T-cell (primary cell): ENCODE measurements at regions of chr14 and their contacts with region 1.

Region 1: GRCh38 chr14:75293920-75294642 is 15.5 kb downstream of the FOS start:
- DNase-seq: peak; percentile 87 to 99 (median 92)
- ATAC-seq: peak; percentile 80 to 97 (median 96)
- H3K4me3 ChIP-seq: peak overlapping the region; percentile 66 to 70
- H3K4me3 Mint-ChIP-seq: peak overlapping the region; percentile 79 to 92 (median 88)
- H3K27ac ChIP-seq: peak overlapping the region; percentile 96
- H3K27ac Mint-ChIP-seq: peak overlapping the region; percentile 85 to 90
- H3K4me1 ChIP-seq: peaks cover 12 to 32% of the 10 kb centered on the region in 2 experiments
- H3K4me1 Mint-ChIP-seq: peaks cover 13 to 25% (median 23%) of the 10 kb centered on the region in 3 donors
- H3K27me3 ChIP-seq: peaks cover 0 to 7% of the 10 kb centered on the region in 2 experiments
- H3K27me3 Mint-ChIP-seq: no peaks in the 10 kb centered on the region

Region 2: DNA sequence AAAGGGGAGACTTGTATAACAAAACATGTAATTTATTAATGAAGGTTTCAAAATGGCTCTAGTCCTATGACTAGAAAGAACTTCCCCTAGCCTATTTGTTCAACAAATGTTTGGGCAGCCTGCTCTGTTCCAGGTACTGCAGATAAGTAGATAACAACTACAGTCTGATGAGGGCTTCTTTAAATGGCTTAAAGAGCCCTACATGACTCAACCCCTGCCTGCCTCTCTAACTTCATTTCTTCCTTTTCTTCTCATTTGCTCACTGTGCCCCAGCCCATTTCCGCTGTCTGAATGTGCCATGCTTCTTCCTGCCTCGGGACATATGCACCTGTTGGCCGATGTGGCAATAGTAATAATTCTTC is 1231.3 kb before region 1 on chr14:
- CTCF ChIA-PET with region 1: no interaction called
- POLR2A ChIA-PET with region 1: no interaction called
- DNase-seq: no peak
- ATAC-seq: no peak
- H3K4me3 ChIP-seq: no peak overlapping the region
- H3K4me3 Mint-ChIP-seq: no peak overlapping the region
- H3K27ac ChIP-seq: no peak overlapping the region
- H3K27ac Mint-ChIP-seq: no peak overlapping the region
- H3K4me1 ChIP-seq: no peaks in the 10 kb centered on the region
- H3K4me1 Mint-ChIP-seq: no peaks in the 10 kb centered on the region
- H3K27me3 ChIP-seq: no peaks in the 10 kb centered on the region
- H3K27me3 Mint-ChIP-seq: no peaks in the 10 kb centered on the region

Region 3: DNA sequence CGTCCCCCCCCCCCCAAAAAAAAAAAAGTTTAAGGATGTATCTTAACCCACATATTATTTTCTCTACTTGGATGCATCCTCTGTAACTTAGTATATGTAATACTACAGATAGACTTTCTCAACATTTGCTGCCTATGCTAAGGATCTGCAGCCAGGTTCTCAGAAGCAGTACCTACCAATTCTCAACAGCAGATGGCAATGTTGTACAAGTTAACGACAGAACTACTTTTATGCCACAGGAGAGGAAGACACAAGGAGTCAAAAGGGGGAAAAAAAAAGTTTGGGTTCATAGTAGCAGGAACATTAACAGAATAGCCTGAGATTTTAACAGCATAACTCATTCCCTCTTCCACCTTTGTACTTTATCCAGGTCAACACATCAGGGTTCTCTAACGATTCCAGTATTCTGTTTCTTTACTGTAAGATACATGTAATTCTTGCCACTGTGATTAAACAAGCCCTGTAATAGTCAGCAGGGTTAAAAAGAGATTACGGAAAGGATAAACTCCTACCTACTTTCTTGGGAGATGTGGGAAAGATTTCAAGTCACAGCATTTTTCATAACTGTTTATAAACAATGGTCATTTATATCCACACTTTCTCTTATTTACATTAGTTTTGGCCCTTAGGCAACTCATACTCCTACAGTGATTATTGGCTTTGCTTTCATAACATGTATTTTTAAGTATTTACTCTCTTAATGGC is 161.5 kb before region 1 on chr14:
- CTCF ChIA-PET with region 1: interaction called, 9 to 13 read pairs
- POLR2A ChIA-PET with region 1: interaction called in 1 of 2 experiments, 4 read pairs
- DNase-seq: peak in 23 of 35 experiments; percentile 6 to 87 (median 31)
- ATAC-seq: peak; percentile 73 to 95 (median 86)
- H3K4me3 ChIP-seq: no peak overlapping the region
- H3K4me3 Mint-ChIP-seq: no peak overlapping the region
- H3K27ac ChIP-seq: no peak overlapping the region
- H3K27ac Mint-ChIP-seq: peak overlapping the region; percentile 27 to 54
- H3K4me1 ChIP-seq: peaks cover 6 to 10% of the 10 kb centered on the region in 2 experiments
- H3K4me1 Mint-ChIP-seq: peaks cover 11 to 19% (median 15%) of the 10 kb centered on the region in 3 donors
- H3K27me3 ChIP-seq: no peaks in the 10 kb centered on the region
- H3K27me3 Mint-ChIP-seq: no peaks in the 10 kb centered on the region

Region 4: DNA sequence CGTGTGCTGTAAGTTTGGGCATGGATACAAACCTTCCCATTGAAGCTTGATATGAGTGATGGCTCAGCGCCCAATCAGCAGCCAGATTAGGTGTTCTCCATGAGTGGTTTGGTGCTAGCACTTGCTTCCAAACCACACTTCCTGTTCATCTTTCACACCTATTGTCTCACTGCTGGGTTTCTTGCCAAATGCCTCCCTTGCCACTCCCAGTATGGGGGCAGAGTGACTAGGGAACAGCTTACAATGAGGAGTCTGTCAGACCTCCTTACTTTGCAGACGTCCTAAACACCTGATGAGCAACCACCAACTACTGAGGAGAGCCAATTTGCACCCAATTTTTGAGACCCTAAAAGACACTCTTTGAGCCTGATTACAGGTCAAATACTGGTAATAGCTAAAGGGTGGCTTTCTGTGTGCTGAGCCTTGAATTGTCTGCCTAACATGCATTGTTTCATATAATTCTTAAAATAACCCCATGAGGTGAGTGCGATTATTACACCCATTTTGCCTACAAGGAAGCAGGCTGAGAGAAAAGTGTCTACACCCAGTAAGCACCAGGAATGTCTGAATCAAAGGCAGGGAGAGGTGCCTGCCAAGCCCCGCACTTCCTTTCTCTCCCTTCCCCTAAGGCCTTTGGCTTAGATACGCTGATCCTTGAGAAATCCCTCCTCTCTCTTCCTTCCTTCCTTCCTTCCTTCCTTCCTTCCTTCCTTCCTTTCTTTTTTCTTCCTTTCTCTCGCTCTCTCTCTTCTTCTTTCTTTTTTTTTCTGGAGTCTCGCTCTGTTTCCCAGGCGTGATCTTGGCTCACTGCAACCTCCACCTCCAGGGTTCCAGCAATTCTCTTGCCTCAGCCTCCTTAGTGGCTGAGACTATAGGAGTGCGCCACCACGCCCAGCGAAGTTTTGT is 63.7 kb before region 1 on chr14:
- CTCF ChIA-PET with region 1: interaction called, 5 to 24 read pairs
- POLR2A ChIA-PET with region 1: interaction called in 1 of 2 experiments, 21 read pairs
- DNase-seq: peak; percentile 17 to 84 (median 49)
- ATAC-seq: peak; percentile 66 to 83 (median 73)
- H3K4me3 ChIP-seq: no peak overlapping the region
- H3K4me3 Mint-ChIP-seq: peak overlapping the region in 1 of 3 donors; percentile 52
- H3K27ac ChIP-seq: peak overlapping the region; percentile 48
- H3K27ac Mint-ChIP-seq: peak overlapping the region; percentile 87 to 89
- H3K4me1 ChIP-seq: peaks cover 17 to 65% of the 10 kb centered on the region in 2 experiments
- H3K4me1 Mint-ChIP-seq: peaks cover 56 to 68% (median 63%) of the 10 kb centered on the region in 3 donors
- H3K27me3 ChIP-seq: peaks cover 0 to 3% of the 10 kb centered on the region in 2 experiments
- H3K27me3 Mint-ChIP-seq: no peaks in the 10 kb centered on the region

Region 5: DNA sequence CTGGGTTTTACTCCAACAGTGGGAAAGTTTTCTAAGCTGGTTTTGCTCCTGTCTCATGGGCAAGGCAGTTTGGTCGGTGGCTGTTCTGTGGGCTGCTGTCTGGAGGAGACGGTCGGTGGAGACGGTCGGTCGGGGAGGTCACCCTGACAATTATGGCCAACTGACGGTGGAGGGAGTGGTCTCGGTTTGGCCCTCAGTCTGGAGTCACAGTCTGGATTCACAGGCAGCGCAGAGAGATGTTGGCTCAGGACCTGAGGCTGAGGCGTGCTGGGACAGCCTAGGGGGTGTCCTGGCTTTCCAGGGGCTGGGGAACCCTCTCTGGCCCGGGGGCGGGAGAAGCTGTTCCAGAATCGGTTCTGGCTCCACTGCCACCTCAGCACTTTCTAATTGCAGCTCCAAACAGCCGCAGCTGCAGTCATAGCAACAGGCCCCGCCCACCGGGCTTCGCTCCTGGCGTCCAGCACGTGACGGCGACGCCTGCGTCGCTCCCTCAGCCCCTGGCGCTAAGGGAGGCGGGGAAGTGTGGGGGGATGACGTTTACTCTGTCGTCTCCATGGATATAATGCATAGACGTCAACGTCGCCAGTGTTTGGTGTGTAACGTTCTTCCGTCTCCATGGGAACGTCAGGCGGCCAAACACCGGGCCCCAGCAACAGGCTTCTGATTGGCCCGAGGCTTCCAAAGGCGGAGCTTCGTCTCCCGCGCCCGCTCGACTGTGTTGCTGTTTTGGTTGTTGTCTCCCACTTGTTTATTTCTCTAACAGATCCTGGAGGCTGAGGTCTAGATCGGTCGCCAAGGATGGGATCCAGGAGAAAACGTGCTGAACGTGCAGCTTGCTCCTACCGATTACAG is 35.2 kb before region 1 on chr14:
- CTCF ChIA-PET with region 1: interaction called, 22 to 24 read pairs
- POLR2A ChIA-PET with region 1: interaction called, 12 to 27 read pairs
- DNase-seq: peak; percentile 92 to 100 (median 100)
- ATAC-seq: peak; percentile 91 to 98 (median 96)
- H3K4me3 ChIP-seq: peak overlapping the region; percentile 38 to 47
- H3K4me3 Mint-ChIP-seq: peak overlapping the region; percentile 85 to 87 (median 87)
- H3K27ac ChIP-seq: peak overlapping the region; percentile 95
- H3K27ac Mint-ChIP-seq: peak overlapping the region; percentile 98 to 100
- H3K4me1 ChIP-seq: peaks cover 9 to 23% of the 10 kb centered on the region in 2 experiments
- H3K4me1 Mint-ChIP-seq: peaks cover 29 to 45% (median 38%) of the 10 kb centered on the region in 3 donors
- H3K27me3 ChIP-seq: peaks cover 0 to 8% of the 10 kb centered on the region in 2 experiments
- H3K27me3 Mint-ChIP-seq: no peaks in the 10 kb centered on the region

Region 6: DNA sequence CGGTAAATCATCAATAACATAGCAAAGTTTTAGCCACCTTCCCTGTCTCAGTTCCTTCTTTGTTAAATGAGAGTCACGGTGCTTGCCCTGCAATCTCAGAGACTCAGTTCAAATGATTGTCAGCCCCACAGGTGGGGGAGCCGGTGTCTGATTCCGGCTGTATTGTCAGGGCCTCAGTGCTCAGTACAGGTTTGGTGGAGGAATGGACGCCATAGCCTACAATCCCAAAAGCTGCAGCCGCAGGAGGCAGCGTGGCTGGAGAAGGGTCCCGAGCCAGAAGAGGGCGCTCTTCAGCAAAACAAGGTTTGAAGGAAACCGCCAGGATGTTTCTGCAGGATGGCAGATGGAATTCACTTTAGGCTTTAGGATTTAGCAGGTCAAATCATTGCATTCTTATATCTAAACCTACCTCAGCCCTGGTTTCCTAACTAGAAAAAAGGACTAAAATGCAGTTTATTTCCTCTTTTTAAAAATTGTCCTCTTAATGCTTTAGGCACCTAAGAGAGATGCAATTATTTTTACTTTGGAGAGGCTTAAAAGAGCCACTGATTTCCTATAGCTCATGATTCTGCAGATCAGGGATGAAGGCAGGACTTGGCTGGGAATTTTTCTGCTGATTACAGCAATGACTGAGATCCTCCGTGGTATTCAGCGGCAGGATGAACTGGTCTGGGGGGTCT is 13.8 kb after region 1 on chr14:
- CTCF ChIA-PET with region 1: interaction called, 3 to 5 read pairs
- POLR2A ChIA-PET with region 1: interaction called in 1 of 2 experiments, 11 read pairs
- DNase-seq: peak in 33 of 35 experiments; percentile 25 to 85 (median 63)
- ATAC-seq: peak; percentile 43 to 78 (median 64)
- H3K4me3 ChIP-seq: no peak overlapping the region
- H3K4me3 Mint-ChIP-seq: no peak overlapping the region
- H3K27ac ChIP-seq: no peak overlapping the region
- H3K27ac Mint-ChIP-seq: no peak overlapping the region
- H3K4me1 ChIP-seq: peaks cover 0 to 11% of the 10 kb centered on the region in 2 experiments
- H3K4me1 Mint-ChIP-seq: peaks cover 3 to 10% (median 7%) of the 10 kb centered on the region in 3 donors
- H3K27me3 ChIP-seq: no peaks in the 10 kb centered on the region
- H3K27me3 Mint-ChIP-seq: no peaks in the 10 kb centered on the region

Region 7: DNA sequence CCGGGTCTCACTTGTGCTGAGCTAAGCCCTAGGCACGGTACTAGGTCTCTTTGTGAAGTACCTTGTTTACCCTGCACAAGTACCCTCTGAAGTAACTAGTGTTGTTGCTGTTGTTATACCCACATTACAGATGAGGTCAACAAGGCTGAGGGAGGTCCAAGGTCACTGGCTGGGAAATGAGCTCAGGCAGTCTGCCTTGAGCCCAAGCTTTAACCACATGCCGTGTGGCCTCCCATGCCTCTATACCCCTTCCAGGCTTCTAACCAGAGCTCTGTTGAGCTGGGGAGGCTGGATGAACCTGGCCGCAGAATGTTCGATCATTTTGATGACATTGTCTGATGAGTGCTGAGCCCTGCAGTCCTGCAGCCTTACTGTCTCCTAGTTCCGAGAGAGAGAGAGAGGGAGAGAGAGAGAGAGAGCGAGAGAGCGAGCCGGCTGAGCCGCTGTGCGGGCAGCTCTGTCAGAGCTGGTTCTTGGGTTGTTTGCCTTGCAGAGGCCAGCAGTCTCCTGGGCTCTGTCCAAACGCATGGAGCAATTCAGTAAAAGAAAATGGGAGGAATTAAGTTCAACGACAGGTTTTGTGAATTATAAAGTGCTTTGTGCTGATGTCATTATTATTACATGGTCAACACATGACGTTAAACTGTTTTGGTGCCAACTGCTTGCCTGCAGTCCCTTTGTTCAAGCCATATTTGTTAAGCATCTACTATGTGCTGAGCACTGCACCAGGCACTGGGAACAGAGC is 146.8 kb after region 1 on chr14:
- CTCF ChIA-PET with region 1: no interaction called
- POLR2A ChIA-PET with region 1: no interaction called
- DNase-seq: no peak
- ATAC-seq: no peak
- H3K4me3 ChIP-seq: no peak overlapping the region
- H3K4me3 Mint-ChIP-seq: no peak overlapping the region
- H3K27ac ChIP-seq: no peak overlapping the region
- H3K27ac Mint-ChIP-seq: no peak overlapping the region
- H3K4me1 ChIP-seq: peaks cover 0 to 8% of the 10 kb centered on the region in 2 experiments
- H3K4me1 Mint-ChIP-seq: peaks cover 0 to 4% (median 3%) of the 10 kb centered on the region in 3 donors
- H3K27me3 ChIP-seq: peaks cover 0 to 22% of the 10 kb centered on the region in 2 experiments
- H3K27me3 Mint-ChIP-seq: peaks cover 0 to 3% of the 10 kb centered on the region in 2 donors